Ovary (tissue), 10 donors: ENCODE measurements at regions of chr17 and their contacts with region 1.

Region 1: DNA sequence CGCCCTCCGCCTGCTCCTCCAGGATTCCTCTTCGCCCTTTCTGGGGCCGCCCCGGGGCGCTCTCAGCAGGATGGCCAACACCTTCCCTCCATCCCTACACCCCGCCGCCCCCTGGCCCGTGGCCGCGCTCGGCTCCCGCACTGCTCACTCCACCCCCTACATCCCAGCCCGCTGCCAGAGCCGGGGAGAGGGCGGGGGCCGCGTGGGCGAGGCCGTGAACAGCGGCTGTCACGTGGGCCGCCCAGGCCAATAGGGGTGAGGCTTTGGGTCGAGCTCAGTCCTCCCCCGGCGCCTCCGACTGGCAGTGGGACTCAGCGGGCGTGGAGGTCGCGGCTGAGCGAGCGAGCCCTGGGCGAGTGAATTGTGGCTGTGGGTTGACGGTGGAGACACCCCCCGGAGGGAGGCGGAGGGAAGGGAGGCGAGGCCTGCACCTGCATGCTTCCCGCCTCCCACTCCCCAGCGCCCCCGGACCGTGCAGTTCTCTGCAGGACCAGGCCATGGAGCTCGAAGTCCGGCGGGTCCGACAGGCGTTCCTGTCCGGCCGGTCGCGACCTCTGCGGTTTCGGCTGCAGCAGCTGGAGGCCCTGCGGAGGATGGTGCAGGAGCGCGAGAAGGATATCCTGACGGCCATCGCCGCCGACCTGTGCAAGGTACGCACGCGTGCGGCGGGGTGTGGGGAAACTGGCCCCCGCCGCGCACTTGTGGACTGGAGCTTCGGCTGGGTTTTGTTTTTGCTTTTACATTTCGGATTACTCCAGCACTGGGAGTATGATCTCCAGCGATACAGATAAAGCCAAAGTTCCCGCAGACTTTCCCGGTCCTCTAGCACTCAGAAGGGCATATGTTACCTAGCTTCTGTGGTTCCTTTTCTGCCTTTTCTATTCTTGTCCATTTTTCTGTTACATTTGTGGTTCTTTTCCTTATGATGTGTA is at the start of gene ALDH3A2:
- DNase-seq: peak; percentile 97 to 98 (median 97)
- H3K4me3 ChIP-seq: peak within 1 kb of the TSS; percentile 82
- H3K27ac ChIP-seq: peak within 1 kb of the TSS; percentile 75 to 96
- H3K4me1 ChIP-seq: peaks cover 17% of the 10 kb centered on the region
- H3K27me3 ChIP-seq: no peaks in the 10 kb centered on the region
- CTCF ChIP-seq: peak in 2 of 3 donors; percentile 19 to 33
- EP300 ChIP-seq: no peak
- POLR2A ChIP-seq: peak; percentile 95
- total RNA-seq, gene ALDH3A2: 48.0 to 109 (median 74.6) TPM

Region 2: DNA sequence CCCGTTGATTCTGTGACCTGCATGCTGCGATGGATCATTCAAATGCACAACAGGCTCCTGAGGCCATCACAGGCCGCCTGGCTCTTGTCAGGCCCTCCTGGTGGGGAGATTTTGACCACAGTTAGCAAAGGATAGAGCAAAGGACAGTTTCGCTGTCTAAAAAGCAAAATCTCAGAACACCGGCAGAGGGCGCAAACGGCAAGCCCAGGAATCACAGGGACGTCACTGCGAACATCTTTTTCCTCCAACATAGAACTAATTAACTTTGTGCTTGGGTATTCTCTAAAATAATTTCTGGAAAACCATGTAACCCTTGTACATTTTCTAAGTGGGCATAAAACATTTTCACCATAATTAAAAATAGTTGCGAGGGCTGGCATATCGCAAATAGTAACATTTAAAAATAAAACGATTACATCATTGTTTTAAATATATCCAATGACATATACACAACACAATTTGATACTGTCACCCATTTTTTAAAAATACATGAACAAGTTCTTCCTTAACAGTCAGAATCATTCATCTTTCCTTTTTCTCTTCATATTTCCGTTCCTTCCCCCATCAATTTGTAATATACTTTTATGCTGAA is 134.7 kb before region 1 on chr17:
- intact Hi-C with region 1: loop called in 1 of 4 experiments (anchors 5 kb)
- DNase-seq: peak; percentile 59 to 81 (median 78)
- H3K4me3 ChIP-seq: no peak overlapping the region
- H3K27ac ChIP-seq: peak overlapping the region in 1 of 2 donors; percentile 21
- H3K4me1 ChIP-seq: no peaks in the 10 kb centered on the region
- H3K27me3 ChIP-seq: no peaks in the 10 kb centered on the region
- CTCF ChIP-seq: peak; percentile 76 to 96 (median 93)
- EP300 ChIP-seq: no peak
- POLR2A ChIP-seq: no peak

Region 3: GRCh38 chr17:19533718-19534561 is 114.8 kb before region 1 on chr17 and contains the start of gene SLC47A1:
- intact Hi-C with region 1: loop called in 1 of 4 experiments (anchors 10 kb)
- DNase-seq: peak in 1 of 5 donors; percentile 72
- H3K4me3 ChIP-seq: peak within 1 kb of the TSS; percentile 50
- H3K27ac ChIP-seq: no peak within 1 kb of the TSS
- H3K4me1 ChIP-seq: no peaks in the 10 kb centered on the region
- H3K27me3 ChIP-seq: no peaks in the 10 kb centered on the region
- CTCF ChIP-seq: no peak
- EP300 ChIP-seq: no peak
- POLR2A ChIP-seq: no peak
- total RNA-seq, gene SLC47A1: 5.0 to 25.8 (median 10.6) TPM

Region 4: GRCh38 chr17:19744922-19745757 is 96.4 kb after region 1 on chr17:
- intact Hi-C with region 1: loop called in 1 of 4 experiments (anchors 10 kb)
- DNase-seq: peak; percentile 92 to 97 (median 95)
- H3K4me3 ChIP-seq: peak overlapping the region; percentile 62
- H3K27ac ChIP-seq: peak overlapping the region in 1 of 2 donors; percentile 49
- H3K4me1 ChIP-seq: peaks cover 5% of the 10 kb centered on the region
- H3K27me3 ChIP-seq: no peaks in the 10 kb centered on the region
- CTCF ChIP-seq: peak; percentile 76 to 90 (median 90)
- EP300 ChIP-seq: no peak
- POLR2A ChIP-seq: no peak

Region 5: GRCh38 chr17:19753049-19753444 is 104.3 kb after region 1 on chr17:
- intact Hi-C with region 1: loop called in 2 of 4 experiments (anchors 5 to 10 kb)
- DNase-seq: peak in 1 of 5 donors; percentile 38
- H3K4me3 ChIP-seq: no peak overlapping the region
- H3K27ac ChIP-seq: no peak overlapping the region
- H3K4me1 ChIP-seq: no peaks in the 10 kb centered on the region
- H3K27me3 ChIP-seq: no peaks in the 10 kb centered on the region
- CTCF ChIP-seq: no peak
- EP300 ChIP-seq: no peak
- POLR2A ChIP-seq: no peak